MCF 10A (cell line): ENCODE measurements at regions of chr14 and their contacts with region 1.

Region 1: GRCh38 chr14:60184146-60184904 is 19.1 kb upstream of the DHRS7 start:
- DNase-seq: peak; percentile 79
- H3K4me3 Mint-ChIP-seq: peak overlapping the region; percentile 58
- H3K27ac Mint-ChIP-seq: peak overlapping the region; percentile 67
- H3K4me1 Mint-ChIP-seq: peaks cover 7% of the 10 kb centered on the region
- H3K27me3 Mint-ChIP-seq: no peaks in the 10 kb centered on the region
- CTCF ChIP-seq: peak; percentile 83

Region 2: DNA sequence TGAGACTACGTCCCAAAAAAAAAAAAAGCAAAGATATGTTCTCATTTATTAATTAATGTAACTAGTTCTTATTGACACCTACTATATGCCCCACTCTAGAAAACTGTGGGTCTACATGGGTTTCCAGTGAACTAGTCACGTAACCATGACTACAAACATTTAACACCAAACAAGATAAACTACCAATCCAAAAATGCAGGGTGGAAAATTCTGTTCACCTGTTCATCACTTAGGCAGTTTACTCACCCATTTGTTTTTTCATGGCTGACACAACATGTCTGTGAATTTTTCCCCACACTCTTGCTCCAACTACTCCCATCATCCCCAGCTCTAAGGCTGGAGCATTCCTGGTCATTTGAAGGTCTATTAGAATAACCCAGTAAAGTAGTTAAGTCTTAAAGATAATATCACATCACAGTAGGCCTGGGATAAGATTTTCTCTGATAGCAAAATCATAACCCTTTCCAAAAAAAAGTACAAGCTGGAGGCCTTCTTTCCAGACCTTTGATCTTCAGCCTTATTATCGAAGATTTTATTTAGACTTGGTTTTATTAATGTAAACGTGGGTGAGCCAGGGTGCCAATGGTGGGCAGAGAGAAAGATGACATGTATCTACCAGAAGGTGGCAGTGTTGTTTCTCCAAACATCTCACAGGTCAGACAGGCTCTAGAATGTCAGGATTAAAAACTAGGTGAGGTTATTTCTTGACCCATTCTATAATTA is 1057.5 kb before region 1 on chr14:
- CTCF ChIA-PET with region 1: interaction called, 4 read pairs
- POLR2A ChIA-PET with region 1: no interaction called
- intact Hi-C with region 1: loop called (anchors 10 kb)
- DNase-seq: peak; percentile 75
- H3K4me3 Mint-ChIP-seq: no peak overlapping the region
- H3K27ac Mint-ChIP-seq: no peak overlapping the region
- H3K4me1 Mint-ChIP-seq: no peaks in the 10 kb centered on the region
- H3K27me3 Mint-ChIP-seq: peaks cover 12% of the 10 kb centered on the region
- CTCF ChIP-seq: peak; percentile 61

Region 3: GRCh38 chr14:59918824-59919569 is 265.3 kb before region 1 on chr14:
- CTCF ChIA-PET with region 1: interaction called, 5 read pairs
- POLR2A ChIA-PET with region 1: no interaction called
- intact Hi-C with region 1: loop called (anchors 5 kb)
- DNase-seq: peak; percentile 34
- H3K4me3 Mint-ChIP-seq: no peak overlapping the region
- H3K27ac Mint-ChIP-seq: no peak overlapping the region
- H3K4me1 Mint-ChIP-seq: no peaks in the 10 kb centered on the region
- H3K27me3 Mint-ChIP-seq: no peaks in the 10 kb centered on the region
- CTCF ChIP-seq: peak; percentile 34

Region 4: DNA sequence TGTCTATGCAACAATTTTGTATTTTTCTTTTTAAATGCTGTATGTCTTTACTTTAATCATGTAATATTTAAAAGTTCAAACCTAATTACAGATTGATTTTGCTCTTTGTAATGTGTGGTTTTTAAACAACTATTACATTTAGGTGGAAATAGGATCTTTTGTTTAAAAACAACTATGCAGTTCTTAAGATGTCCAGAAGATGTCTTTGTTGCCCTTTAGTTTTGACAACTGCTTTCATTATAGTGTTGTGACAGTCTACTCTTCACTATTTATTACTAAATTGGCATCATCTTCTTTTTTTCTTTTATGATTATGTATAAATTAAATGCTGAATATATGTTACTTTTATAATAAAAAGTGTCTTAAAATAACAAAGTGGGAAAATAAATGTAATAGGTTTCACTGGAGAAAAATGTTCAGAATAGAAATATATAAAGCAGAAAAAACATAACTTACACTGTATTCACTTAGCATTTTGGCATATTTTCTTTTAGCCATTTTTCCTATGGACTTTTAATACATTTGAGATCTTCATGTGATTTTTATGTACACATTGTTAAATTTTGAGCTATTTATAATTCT is 119.7 kb before region 1 on chr14:
- CTCF ChIA-PET with region 1: interaction called, 32 read pairs
- POLR2A ChIA-PET with region 1: no interaction called
- intact Hi-C with region 1: loop called (anchors 1 kb)
- DNase-seq: peak; percentile 44
- H3K4me3 Mint-ChIP-seq: no peak overlapping the region
- H3K27ac Mint-ChIP-seq: no peak overlapping the region
- H3K4me1 Mint-ChIP-seq: peaks cover 8% of the 10 kb centered on the region
- H3K27me3 Mint-ChIP-seq: no peaks in the 10 kb centered on the region
- CTCF ChIP-seq: peak; percentile 53

Region 5: DNA sequence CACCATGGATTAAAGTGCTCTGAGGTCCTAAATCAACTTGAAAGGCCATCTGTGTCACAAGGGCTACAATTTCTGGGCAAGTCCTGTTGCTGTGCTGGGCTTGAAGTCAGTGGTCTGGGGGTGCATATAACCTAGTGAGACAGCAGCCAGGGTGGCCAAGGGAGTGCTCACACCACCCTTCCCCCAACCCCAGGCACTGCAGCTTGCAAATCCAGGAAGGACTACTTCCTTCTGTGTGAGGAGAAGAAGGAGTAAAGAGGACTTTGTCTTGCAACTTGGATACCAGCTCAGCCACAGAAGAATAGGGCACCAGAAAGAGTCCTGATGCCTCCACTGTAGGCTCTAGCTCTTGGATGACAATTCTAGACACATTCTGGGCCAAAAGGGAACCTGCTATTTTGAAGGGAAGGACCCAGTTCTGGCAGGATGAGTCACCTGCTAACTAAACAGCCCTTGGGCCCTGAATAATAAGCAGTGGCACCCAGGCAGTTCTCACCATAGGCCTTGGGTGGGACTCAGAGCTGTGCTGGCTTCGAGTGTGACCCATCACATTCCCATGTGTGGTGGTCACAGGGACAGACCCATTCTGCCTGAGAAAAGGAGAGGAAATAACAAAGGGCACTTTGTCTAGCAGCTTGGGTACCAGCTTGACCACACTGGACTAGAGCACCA is 13.4 kb after region 1 on chr14:
- CTCF ChIA-PET with region 1: interaction called, 10 read pairs
- POLR2A ChIA-PET with region 1: no interaction called
- intact Hi-C with region 1: no loop called
- DNase-seq: peak; percentile 35
- H3K4me3 Mint-ChIP-seq: no peak overlapping the region
- H3K27ac Mint-ChIP-seq: no peak overlapping the region
- H3K4me1 Mint-ChIP-seq: no peaks in the 10 kb centered on the region
- H3K27me3 Mint-ChIP-seq: no peaks in the 10 kb centered on the region
- CTCF ChIP-seq: no peak

Region 6: GRCh38 chr14:60488175-60488574 is 303.9 kb after region 1 on chr14:
- CTCF ChIA-PET with region 1: no interaction called
- POLR2A ChIA-PET with region 1: no interaction called
- intact Hi-C with region 1: loop called (anchors 2 kb)
- DNase-seq: no peak
- H3K4me3 Mint-ChIP-seq: no peak overlapping the region
- H3K27ac Mint-ChIP-seq: no peak overlapping the region
- H3K4me1 Mint-ChIP-seq: no peaks in the 10 kb centered on the region
- H3K27me3 Mint-ChIP-seq: peaks cover 11% of the 10 kb centered on the region
- CTCF ChIP-seq: peak; percentile 20